ENCODE measurements at regions of chr9 and their contacts with region 1.

Region 1: DNA sequence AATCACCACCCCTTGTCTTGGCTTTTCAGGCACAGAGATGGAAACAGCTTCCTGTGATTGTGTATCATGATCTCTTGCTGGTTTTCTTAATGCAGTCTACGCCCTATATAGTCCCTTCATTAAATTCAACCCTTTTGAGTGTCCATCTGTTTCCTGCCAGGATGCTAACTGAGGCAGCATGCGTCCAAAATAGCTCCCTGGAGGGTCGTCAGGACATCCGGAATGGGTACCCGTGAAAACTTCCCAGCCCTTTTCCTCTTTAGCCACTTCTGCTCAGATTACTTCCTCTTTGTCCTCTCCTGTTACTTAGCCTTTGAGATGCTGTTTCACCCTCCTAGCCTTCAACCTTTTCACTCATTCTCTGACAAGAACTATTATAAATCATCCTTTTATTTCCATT is 79.8 kb upstream of the KLF9 start:
- DNase-seq: no peak
- ATAC-seq: no peak
- H3K4me3 ChIP-seq: no peak overlapping the region
- H3K27ac ChIP-seq: no peak overlapping the region
- H3K4me1 ChIP-seq: peaks cover 18% of the 10 kb centered on the region
- H3K27me3 ChIP-seq: no peaks in the 10 kb centered on the region
- CTCF ChIP-seq: no peak

Region 2: GRCh38 chr9:70569070-70569772 is 75.0 kb after region 1 on chr9:
- intact Hi-C with region 1: loop called in 1 of 2 experiments (anchors 5 kb)
- DNase-seq: no peak
- ATAC-seq: peak in 1 of 4 donors; percentile 54
- H3K4me3 ChIP-seq: no peak overlapping the region
- H3K27ac ChIP-seq: no peak overlapping the region
- H3K4me1 ChIP-seq: peaks cover 6% of the 10 kb centered on the region
- H3K27me3 ChIP-seq: no peaks in the 10 kb centered on the region
- CTCF ChIP-seq: no peak

Region 3: GRCh38 chr9:70587201-70587600 is 93.0 kb after region 1 on chr9:
- intact Hi-C with region 1: loop called in 1 of 2 experiments (anchors 10 kb)
- DNase-seq: no peak
- ATAC-seq: peak; percentile 81 to 93 (median 90)
- H3K4me3 ChIP-seq: peak overlapping the region; percentile 24
- H3K27ac ChIP-seq: peak overlapping the region; percentile 82
- H3K4me1 ChIP-seq: peaks cover 30% of the 10 kb centered on the region
- H3K27me3 ChIP-seq: no peaks in the 10 kb centered on the region
- CTCF ChIP-seq: no peak